Cardiac septum (tissue), 1 donor: ENCODE measurements at regions of chr3 and their contacts with region 1.

Region 1: DNA sequence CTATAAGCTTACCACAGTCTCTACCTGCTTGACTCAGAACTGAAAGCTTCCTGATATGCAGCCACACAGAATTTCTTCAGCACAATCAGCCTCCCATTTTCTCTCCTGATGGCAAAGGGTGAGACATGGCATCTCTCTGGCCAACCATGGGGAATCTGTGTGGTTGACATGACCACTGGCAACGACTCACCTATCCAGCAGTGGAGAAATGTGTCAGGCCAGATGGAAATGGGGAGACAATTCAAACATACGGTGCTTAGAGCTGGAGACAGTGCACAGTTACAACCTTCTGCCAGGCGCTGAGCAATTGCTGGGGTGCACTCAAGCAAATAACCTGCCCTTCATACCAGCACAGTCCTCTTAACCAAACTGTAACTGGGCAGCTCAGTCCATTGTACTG is 3.6 kb downstream of the ZNF385D start:
- DNase-seq: no peak

Region 2: GRCh38 chr3:21477541-21478288 is 269.7 kb before region 1 on chr3:
- intact Hi-C with region 1: no loop called
- DNase-seq: no peak

Region 3: DNA sequence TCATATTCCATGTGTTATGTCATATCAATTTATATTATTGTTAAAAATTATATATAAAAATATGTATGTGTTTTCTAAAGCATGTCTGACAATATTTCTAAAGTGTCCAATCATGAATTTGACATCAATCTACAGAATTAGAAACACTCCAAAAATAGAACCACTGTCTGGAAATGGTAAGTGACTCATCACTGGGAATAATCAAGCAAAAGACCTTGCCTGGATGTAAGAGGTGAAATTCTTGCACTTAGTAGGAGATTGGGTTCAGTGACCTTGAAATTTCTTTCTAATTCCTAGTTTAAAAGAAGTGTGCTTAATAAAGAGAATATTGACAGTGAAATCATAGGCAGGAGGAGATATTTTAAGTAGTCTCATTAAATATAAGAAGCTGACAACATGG is 185.1 kb before region 1 on chr3:
- intact Hi-C with region 1: no loop called
- DNase-seq: no peak

Region 4: GRCh38 chr3:21587894-21588293 is 159.5 kb before region 1 on chr3:
- intact Hi-C with region 1: loop called (anchors 10 kb)
- DNase-seq: no peak

Region 5: GRCh38 chr3:21645121-21645897 is 102.1 kb before region 1 on chr3:
- intact Hi-C with region 1: loop called (anchors 2 kb)
- DNase-seq: peak; percentile 86

Region 6: DNA sequence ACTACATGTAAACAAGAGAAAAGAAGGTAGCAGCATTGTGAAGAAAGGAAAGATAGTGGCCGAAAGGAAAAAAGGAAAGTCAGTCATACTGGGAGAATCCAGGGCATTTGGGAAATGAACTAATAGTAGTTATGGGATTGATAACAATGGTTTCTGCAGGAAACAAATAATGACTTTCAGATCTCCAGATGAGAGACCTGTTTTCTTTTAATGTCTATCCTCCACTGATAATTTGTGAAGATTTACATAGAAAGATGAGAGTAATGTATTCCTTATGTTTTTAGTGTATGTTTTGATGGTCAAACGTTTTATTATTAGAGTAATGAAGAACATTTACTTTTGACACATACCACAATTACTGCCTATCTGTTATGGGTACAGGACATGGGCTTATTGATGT is 18.6 kb after region 1 on chr3:
- intact Hi-C with region 1: no loop called
- DNase-seq: no peak